ENCODE measurements at regions of chr9 and their contacts with region 1.

Region 1: GRCh38 chr9:112379177-112380101 is 469 bp upstream of the HSDL2 start:
- DNase-seq: peak; percentile 97
- H3K4me3 Mint-ChIP-seq: peak overlapping the region; percentile 99
- H3K27ac Mint-ChIP-seq: peak overlapping the region; percentile 100
- H3K4me1 Mint-ChIP-seq: peaks cover 50% of the 10 kb centered on the region
- H3K27me3 Mint-ChIP-seq: no peaks in the 10 kb centered on the region

Region 2: GRCh38 chr9:111483862-111484571 is 895.4 kb before region 1 on chr9 and contains the start of gene ECPAS:
- intact Hi-C with region 1: loop called (anchors 5 kb)
- DNase-seq: peak; percentile 59
- H3K4me3 Mint-ChIP-seq: peak within 1 kb of the TSS; percentile 84
- H3K27ac Mint-ChIP-seq: peak within 1 kb of the TSS; percentile 82
- H3K4me1 Mint-ChIP-seq: peaks cover 23% of the 10 kb centered on the region
- H3K27me3 Mint-ChIP-seq: peaks cover 9% of the 10 kb centered on the region
- total RNA-seq, gene ECPAS: 96.8 and 107 TPM in 2 replicates

Region 3: GRCh38 chr9:111896353-111896958 is 483.0 kb before region 1 on chr9 and contains the start of gene UGCG:
- intact Hi-C with region 1: loop called (anchors 10 kb)
- DNase-seq: peak; percentile 85
- H3K4me3 Mint-ChIP-seq: peak within 1 kb of the TSS; percentile 84
- H3K27ac Mint-ChIP-seq: peak within 1 kb of the TSS; percentile 83
- H3K4me1 Mint-ChIP-seq: peaks cover 9% of the 10 kb centered on the region
- H3K27me3 Mint-ChIP-seq: peaks cover 3% of the 10 kb centered on the region
- total RNA-seq, gene UGCG: 14.4 and 16.6 TPM in 2 replicates

Region 4: GRCh38 chr9:112037281-112038016 is 342.0 kb before region 1 on chr9:
- intact Hi-C with region 1: loop called (anchors 1 kb)
- DNase-seq: peak; percentile 70
- H3K4me3 Mint-ChIP-seq: no peak overlapping the region
- H3K27ac Mint-ChIP-seq: peak overlapping the region; percentile 76
- H3K4me1 Mint-ChIP-seq: peaks cover 36% of the 10 kb centered on the region
- H3K27me3 Mint-ChIP-seq: peaks cover 33% of the 10 kb centered on the region

Region 5: DNA sequence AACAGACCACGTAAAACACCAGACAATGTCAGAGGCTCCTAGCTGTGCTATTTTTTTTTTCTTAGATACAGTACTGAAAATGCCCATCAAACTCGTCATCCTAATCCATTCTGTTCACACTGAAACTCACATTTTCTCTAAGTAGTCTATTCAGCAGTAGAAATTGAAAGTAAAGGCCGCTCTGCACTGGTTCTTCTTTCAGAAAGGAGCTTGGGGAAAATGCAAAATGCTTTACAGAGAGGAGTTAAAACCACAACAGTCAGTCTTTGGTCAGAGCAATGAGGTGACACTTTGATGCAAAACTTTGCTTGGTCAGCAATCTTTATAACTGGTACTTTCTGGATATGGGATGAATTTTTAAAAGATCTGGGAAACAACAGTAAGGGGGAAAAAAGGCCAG is 160.5 kb before region 1 on chr9:
- intact Hi-C with region 1: loop called (anchors 1 kb)
- DNase-seq: peak; percentile 13
- H3K4me3 Mint-ChIP-seq: no peak overlapping the region
- H3K27ac Mint-ChIP-seq: peak overlapping the region; percentile 80
- H3K4me1 Mint-ChIP-seq: peaks cover 35% of the 10 kb centered on the region
- H3K27me3 Mint-ChIP-seq: no peaks in the 10 kb centered on the region

Region 6: GRCh38 chr9:112355427-112355897 is 24.0 kb before region 1 on chr9:
- intact Hi-C with region 1: loop called (anchors 2 kb)
- DNase-seq: no peak
- H3K4me3 Mint-ChIP-seq: no peak overlapping the region
- H3K27ac Mint-ChIP-seq: peak overlapping the region; percentile 56
- H3K4me1 Mint-ChIP-seq: peaks cover 25% of the 10 kb centered on the region
- H3K27me3 Mint-ChIP-seq: peaks cover 2% of the 10 kb centered on the region

Region 7: DNA sequence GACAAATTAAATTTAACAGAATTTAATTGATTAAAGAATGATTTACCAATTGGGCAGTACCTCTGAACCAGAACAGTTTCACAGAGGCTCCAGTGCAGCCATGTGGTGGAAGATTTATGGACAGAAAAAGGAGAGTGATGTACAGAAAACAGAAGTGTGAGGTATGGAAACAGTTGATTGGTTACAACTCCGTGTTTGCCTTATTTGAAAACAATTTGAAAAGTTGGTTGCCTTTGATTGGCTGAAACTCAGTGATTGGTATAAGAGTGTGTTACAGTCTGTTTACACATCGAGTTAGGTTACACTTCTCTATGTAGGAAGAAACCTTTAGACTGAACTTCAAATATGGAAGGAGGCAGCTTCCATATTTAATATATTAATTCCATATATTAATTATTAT is 137.3 kb after region 1 on chr9:
- intact Hi-C with region 1: no loop called
- DNase-seq: no peak
- H3K4me3 Mint-ChIP-seq: no peak overlapping the region
- H3K27ac Mint-ChIP-seq: no peak overlapping the region
- H3K4me1 Mint-ChIP-seq: no peaks in the 10 kb centered on the region
- H3K27me3 Mint-ChIP-seq: no peaks in the 10 kb centered on the region

Region 8: DNA sequence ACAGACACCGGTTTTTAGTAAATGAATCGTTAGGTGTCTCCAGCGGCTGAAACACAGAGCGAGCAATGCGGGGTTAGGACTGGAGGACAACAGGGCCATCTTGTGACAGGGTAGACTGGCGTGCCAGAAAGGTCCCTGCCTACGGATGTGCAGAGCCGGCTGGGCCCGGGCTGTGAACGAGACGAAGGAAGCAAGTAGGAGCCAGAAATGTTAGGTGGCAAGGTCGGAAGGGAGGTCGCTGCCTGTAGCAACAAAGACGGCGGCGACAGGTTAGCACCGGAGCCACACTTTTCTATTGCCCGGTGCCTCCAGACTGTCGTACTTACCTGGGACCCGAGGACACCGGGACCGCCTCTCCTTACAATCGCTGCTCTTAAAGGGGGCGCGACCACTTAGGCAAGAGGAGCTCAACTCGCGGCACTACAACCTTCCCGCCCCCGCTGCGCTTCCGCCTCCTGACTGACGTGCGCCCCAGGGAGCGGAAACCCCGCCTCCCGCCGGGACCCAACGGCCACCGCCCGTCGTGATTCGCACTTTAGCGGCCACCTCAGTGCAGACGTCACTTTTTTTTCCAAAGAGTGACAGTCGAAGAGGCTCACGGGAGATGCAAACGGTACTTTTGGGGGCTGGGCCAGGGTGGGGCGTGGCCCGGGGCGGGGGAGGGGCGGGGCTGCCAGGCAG is 338.4 kb after region 1 on chr9 and contains the start of gene INIP:
- intact Hi-C with region 1: loop called (anchors 2 kb)
- DNase-seq: peak; percentile 98
- H3K4me3 Mint-ChIP-seq: peak within 1 kb of the TSS; percentile 91
- H3K27ac Mint-ChIP-seq: peak within 1 kb of the TSS; percentile 97
- H3K4me1 Mint-ChIP-seq: peaks cover 33% of the 10 kb centered on the region
- H3K27me3 Mint-ChIP-seq: no peaks in the 10 kb centered on the region
- total RNA-seq, gene INIP: 34.2 and 36.6 TPM in 2 replicates

Measured in activated T-helper 2 cell treated with anti-CD3 and anti-CD28 coated beads, Interferon-gamma antibody, Interleukin-2, Interleukin-4, amounts not matched to agents 10 μg/mL and 5 μg/mL and 100 μg/mL, durations not matched to agents 14 hours and 24 hours and 36 hours (primary cell).